ENCODE measurements at regions of chr4 and their contacts with region 1.

Region 1: GRCh38 chr4:10180927-10181782 is 64.6 kb upstream of the WDR1 start:
- DNase-seq: no peak

Region 2: DNA sequence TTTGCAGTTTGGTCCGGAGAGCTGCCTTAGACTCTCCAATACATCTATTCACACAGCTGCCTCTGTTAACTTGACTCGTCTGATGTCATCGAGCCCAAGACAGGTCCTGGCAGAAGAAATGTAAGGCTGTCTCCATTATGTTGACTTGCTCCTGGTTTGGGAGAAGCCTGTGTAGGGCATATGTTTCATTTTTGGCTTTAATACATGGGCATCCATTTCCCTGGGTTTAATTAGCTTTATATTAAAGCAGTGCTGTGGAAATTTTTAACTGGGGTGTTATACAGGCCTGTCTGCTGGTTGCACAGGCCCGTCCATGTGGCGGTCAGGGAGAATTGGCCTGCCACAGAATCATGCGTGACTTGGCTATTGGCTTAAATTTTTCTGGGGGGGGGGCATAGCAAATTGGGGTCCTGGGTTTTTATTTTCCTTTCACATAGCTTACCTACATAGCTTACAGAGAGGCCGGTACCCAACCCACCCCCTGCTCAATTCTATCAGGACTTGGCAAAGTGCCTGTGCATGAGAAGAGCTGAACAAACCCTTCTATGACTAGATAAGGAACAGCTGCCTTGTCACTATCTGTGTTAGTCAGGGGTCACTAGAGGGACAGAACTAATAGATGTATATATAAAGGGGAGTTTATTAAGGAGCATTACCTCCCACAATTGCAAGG is 59.0 kb after region 1 on chr4:
- intact Hi-C with region 1: loop called in 1 of 2 experiments (anchors 10 kb)
- DNase-seq: no peak

Region 3: DNA sequence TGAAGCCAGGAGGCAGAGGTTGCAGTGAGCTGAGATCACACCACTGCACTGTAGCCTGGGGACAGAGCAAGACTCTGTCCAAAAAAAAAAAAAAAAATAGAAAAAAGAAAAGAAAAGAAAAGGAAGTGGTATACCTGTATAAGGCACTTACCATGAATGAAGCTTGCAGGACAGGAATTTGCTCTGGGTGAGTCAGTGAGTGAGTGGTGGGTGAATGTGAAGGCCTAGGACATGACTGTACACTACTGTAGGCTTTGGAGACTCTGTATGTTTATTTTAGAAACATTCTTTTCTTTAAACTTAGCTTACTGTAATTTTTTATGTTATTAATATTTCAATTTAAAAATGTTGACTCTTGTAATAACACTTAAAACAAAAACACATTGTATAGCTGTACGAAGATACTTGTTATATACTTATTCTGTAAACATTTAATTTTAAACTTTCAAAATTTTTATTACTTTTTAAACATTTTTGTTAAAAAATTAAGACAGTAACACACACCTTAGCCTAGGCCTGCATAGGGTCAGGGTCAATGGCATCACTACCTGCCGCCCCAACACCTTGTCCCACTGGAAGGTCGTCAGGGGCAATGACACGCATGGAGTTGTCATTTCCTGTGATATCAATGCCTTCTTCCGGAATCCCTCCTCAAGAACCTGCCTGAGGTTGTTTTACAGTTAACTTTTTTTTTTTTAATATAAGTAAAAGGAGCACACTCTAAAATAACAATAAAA is 424.8 kb after region 1 on chr4:
- intact Hi-C with region 1: no loop called
- DNase-seq: no peak

Measured in posterior vena cava (tissue), 2 donors.